ENCODE measurements at regions of chr3 and their contacts with region 1.

Region 1: DNA sequence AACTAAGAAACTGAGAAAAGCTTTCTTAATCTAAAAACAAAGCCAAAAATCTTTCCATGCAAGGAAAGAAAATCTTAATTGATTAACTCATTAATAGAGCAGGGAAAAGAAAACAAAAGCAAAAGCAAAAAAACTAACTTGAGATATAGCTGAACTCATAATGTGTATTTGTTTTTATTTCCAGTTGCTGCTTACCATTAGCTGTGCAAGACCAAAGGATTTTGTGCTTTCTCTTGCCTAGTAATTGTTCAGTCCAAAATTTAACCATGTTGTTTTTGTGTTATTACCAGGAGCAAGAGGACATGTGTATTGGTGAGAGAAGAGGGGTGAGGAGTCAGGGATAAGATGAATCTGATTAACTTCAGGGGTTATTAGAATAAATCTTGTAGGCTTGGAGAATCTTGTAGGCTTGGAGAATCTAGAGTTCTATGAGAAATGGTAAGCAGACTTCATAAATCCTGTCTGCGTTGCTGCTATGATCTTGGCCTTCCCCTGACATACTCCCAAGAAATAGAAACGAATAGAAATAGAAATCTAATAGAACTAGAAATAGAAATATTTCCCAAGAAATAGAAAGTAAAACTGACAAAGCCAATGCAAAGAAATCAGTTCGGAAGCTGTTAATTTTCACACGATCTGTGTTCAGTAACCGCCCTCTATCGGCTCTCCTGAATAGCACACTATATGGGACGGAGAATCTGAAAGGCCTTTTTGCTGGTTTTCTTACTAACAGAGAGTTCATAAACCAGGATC is 72.6 kb upstream of the TNFSF10 start:
- DNase-seq: peak; percentile 80
- H3K4me3 Mint-ChIP-seq: peak overlapping the region; percentile 55
- H3K27ac Mint-ChIP-seq: no peak overlapping the region
- H3K4me1 Mint-ChIP-seq: peaks cover 21% of the 10 kb centered on the region
- H3K27me3 Mint-ChIP-seq: no peaks in the 10 kb centered on the region
- CTCF ChIP-seq: peak; percentile 84

Region 2: GRCh38 chr3:172332256-172333041 is 263.4 kb before region 1 on chr3:
- CTCF ChIA-PET with region 1: interaction called, 19 read pairs
- POLR2A ChIA-PET with region 1: no interaction called
- intact Hi-C with region 1: no loop called
- DNase-seq: peak; percentile 77
- H3K4me3 Mint-ChIP-seq: no peak overlapping the region
- H3K27ac Mint-ChIP-seq: no peak overlapping the region
- H3K4me1 Mint-ChIP-seq: no peaks in the 10 kb centered on the region
- H3K27me3 Mint-ChIP-seq: no peaks in the 10 kb centered on the region
- CTCF ChIP-seq: peak; percentile 83

Region 3: GRCh38 chr3:172501560-172501959 is 94.3 kb before region 1 on chr3:
- CTCF ChIA-PET with region 1: interaction called, 13 read pairs
- POLR2A ChIA-PET with region 1: interaction called, 4 read pairs
- intact Hi-C with region 1: no loop called
- DNase-seq: no peak
- H3K4me3 Mint-ChIP-seq: no peak overlapping the region
- H3K27ac Mint-ChIP-seq: no peak overlapping the region
- H3K4me1 Mint-ChIP-seq: no peaks in the 10 kb centered on the region
- H3K27me3 Mint-ChIP-seq: no peaks in the 10 kb centered on the region
- CTCF ChIP-seq: no peak

Region 4: GRCh38 chr3:172522871-172523818 is 72.7 kb before region 1 on chr3 and contains the start of gene TNFSF10:
- CTCF ChIA-PET with region 1: interaction called, 13 read pairs
- POLR2A ChIA-PET with region 1: interaction called, 8 read pairs
- intact Hi-C with region 1: no loop called
- DNase-seq: peak; percentile 62
- H3K4me3 Mint-ChIP-seq: peak within 1 kb of the TSS; percentile 68
- H3K27ac Mint-ChIP-seq: peak within 1 kb of the TSS; percentile 74
- H3K4me1 Mint-ChIP-seq: peaks cover 16% of the 10 kb centered on the region
- H3K27me3 Mint-ChIP-seq: no peaks in the 10 kb centered on the region
- CTCF ChIP-seq: no peak
- total RNA-seq, gene TNFSF10: 0.25 and 0.54 TPM in 2 replicates

Region 5: DNA sequence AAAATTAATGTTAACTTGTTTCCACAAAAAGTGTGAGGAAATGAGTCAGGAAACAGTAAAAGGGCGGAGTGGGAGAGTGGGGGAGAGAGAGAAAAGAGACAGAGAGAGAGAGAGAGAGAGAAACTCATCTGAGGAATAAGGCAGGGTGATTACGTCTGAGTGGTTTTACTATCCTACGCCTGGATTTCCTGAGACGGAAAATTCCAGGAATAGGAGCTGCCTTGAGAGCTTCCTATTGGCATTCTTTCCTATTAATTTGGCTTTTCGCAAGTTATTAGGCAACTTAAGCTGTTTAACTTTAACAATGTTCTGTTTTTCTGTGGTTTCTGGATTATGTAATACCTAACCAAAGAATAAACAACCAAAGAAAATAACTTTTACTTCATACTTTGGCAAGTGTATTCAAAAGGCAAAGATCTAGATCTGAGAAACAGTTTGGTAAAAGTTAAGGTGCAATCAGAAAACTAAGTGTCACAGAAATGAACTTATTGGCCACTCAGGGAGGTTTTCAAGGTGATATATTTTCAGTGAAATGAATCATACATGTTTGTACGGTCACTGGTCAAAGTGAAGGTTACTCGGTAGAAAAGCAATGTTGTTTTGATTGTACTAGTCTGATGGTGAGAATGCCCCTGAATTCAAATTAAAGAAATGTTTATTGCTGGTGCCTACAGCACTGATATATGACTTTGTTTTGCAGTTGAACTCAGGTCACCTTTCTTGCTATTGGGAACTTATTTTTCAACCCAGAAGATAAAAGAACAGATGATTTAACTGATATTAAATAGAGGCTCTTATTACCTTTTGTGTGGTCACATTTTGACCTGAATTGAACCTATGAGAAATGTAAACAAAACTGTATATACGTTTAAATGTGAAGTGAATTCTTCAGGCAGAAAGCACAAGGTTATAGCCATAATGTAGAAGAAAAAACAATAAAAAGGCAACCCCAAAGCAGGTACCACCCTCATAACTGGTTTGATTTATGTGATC is 32.6 kb before region 1 on chr3:
- CTCF ChIA-PET with region 1: interaction called, 4 read pairs
- POLR2A ChIA-PET with region 1: interaction called, 45 read pairs
- intact Hi-C with region 1: no loop called
- DNase-seq: peak; percentile 97
- H3K4me3 Mint-ChIP-seq: peak overlapping the region; percentile 57
- H3K27ac Mint-ChIP-seq: peak overlapping the region; percentile 95
- H3K4me1 Mint-ChIP-seq: peaks cover 28% of the 10 kb centered on the region
- H3K27me3 Mint-ChIP-seq: no peaks in the 10 kb centered on the region
- CTCF ChIP-seq: no peak

Region 6: DNA sequence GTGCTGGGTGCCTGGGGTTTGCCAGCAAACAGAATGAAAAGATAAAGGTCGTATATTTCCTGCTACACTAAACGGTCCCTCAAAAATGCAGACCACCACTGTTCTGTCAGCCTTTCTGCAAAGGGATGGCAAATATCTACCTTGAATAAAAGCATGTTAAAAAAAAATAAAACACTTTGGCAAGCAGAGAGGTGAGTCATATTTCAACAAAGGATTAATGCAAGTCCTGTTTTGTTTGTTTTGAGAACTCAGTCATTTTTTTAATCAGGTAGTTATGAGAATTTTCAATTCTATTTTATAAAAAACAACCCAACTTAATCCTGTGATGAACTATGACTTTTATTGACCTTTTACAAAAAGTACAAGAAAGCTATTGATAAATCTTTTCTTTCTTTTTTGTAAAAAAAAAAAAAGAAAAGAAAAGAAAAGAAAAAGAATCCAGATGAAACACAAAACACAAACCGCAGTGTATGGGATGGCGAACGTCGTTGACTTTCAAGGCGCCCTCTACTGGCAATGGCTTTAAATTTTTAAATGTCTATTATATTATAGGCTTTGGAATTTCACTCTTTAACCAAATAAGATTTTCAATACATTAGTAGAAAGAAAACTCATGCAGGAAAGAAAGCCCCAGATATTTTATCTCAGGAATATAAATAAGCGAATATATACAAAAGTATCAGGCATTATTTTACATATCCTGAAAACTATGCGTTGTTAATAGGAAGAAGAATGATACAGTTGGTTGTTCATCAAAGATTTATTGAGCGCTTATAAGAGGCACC is 27.3 kb after region 1 on chr3:
- CTCF ChIA-PET with region 1: interaction called, 19 read pairs
- POLR2A ChIA-PET with region 1: interaction called, 4 read pairs
- intact Hi-C with region 1: no loop called
- DNase-seq: peak; percentile 73
- H3K4me3 Mint-ChIP-seq: no peak overlapping the region
- H3K27ac Mint-ChIP-seq: no peak overlapping the region
- H3K4me1 Mint-ChIP-seq: peaks cover 34% of the 10 kb centered on the region
- H3K27me3 Mint-ChIP-seq: no peaks in the 10 kb centered on the region
- CTCF ChIP-seq: peak; percentile 48

Region 7: DNA sequence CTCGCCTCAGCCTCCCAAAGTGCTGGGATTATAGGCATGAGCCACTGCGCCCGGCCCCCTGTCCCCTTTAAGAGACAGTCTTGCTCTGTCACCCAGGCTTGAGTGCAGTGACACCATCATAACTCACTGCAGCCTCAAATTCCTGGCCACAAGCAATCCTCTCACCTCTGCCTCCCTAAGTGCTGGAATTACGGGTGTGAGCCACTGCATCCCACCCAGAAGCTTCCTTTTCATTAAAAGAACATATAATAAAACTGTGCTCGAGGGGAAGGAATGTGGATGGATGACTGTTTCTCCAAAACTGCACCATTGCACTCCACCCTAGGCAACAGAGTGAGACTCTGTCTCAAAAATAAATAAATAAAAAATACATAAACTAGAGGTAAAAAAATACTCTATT is 44.9 kb after region 1 on chr3:
- CTCF ChIA-PET with region 1: no interaction called
- POLR2A ChIA-PET with region 1: no interaction called
- intact Hi-C with region 1: no loop called
- DNase-seq: no peak
- H3K4me3 Mint-ChIP-seq: no peak overlapping the region
- H3K27ac Mint-ChIP-seq: no peak overlapping the region
- H3K4me1 Mint-ChIP-seq: peaks cover 1% of the 10 kb centered on the region
- H3K27me3 Mint-ChIP-seq: no peaks in the 10 kb centered on the region
- CTCF ChIP-seq: no peak